Natural killer cell (primary cell): ENCODE measurements at regions of chr12 and their contacts with region 1.

Region 1: DNA sequence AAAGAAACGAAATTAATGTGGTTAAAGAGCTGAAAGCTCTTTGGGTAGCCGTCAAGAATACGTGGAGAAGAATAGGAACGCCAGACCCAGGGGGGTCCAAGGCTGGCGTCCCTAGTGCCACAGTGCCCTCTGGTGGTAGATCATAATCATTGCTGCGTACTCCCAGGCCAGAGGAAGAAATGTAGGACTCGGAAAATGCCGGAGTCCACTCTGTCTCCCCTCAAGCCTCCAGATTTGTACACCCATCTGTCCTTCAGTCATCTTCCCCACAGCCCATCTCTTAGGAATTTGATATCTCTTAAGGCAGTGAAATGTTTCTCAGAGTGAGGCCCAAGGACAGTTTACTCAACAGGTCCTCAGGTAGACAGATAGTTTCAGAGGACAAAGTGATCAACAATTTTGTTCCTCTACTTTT is 25.4 kb upstream of the PLEKHG6 start:
- DNase-seq: peak in 1 of 2 donors; percentile 87
- ATAC-seq: peak; percentile 82 to 92 (median 83)
- H3K4me3 ChIP-seq: no peak overlapping the region
- H3K4me3 Mint-ChIP-seq: no peak overlapping the region
- H3K27ac ChIP-seq: no peak overlapping the region
- H3K27ac Mint-ChIP-seq: no peak overlapping the region
- H3K4me1 ChIP-seq: no peaks in the 10 kb centered on the region
- H3K4me1 Mint-ChIP-seq: no peaks in the 10 kb centered on the region
- H3K27me3 ChIP-seq: no peaks in the 10 kb centered on the region
- H3K27me3 Mint-ChIP-seq: peaks cover 11 to 15% of the 10 kb centered on the region in 2 donors
- CTCF ChIP-seq: peak; percentile 74

Region 2: DNA sequence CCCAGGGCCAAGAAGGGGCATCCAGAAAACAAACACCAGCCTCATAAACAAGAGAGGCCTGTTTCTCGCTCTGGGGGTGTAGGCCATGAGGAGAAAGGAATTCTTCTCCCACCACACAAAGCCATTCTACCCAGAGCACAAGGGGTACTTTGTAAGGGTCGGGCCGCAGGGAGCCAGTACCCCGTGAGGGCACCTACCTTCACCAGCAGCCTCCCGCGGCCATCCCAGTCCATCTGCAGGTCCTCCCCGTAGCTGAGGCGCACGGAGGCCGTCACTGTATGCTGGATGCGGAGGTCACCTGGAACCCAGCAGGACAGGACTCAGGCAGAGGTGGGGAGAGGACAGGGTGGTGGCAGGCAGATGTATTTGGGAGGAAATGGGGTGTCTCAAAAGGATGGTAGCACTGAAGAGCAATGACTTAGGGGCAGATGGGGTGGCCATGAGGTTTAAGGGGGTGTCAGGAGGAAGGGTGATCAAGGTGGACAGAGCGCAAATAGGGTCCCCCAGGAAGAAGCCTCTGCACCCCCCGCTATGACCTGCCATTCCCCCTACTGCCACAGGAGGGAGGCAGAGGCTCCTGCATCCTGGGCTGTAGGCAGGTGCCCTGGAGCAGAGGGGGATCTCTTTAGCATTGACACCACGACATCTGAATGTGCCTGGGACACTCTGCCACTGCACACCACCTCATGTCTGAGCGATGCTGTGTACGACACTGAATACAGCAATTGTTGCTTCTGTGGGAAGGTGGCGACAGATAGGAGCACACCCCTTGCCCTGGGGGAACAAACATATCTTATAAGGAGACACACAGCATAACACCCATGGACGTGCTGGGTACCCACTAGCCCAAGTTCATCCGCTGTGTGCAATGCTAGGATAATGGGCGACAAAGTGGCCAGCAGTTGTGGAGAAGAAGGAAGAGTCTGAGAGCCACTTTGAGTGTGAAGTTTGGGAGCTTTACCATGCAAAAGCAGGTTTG is 222.0 kb before region 1 on chr12:
- intact Hi-C with region 1: loop called (anchors 1 kb)
- DNase-seq: peak; percentile 43 to 79
- ATAC-seq: peak; percentile 76 to 98 (median 96)
- H3K4me3 ChIP-seq: no peak overlapping the region
- H3K4me3 Mint-ChIP-seq: no peak overlapping the region
- H3K27ac ChIP-seq: no peak overlapping the region
- H3K27ac Mint-ChIP-seq: no peak overlapping the region
- H3K4me1 ChIP-seq: no peaks in the 10 kb centered on the region
- H3K4me1 Mint-ChIP-seq: no peaks in the 10 kb centered on the region
- H3K27me3 ChIP-seq: no peaks in the 10 kb centered on the region
- H3K27me3 Mint-ChIP-seq: peaks cover 33 to 51% of the 10 kb centered on the region in 2 donors
- CTCF ChIP-seq: peak; percentile 86

Region 3: DNA sequence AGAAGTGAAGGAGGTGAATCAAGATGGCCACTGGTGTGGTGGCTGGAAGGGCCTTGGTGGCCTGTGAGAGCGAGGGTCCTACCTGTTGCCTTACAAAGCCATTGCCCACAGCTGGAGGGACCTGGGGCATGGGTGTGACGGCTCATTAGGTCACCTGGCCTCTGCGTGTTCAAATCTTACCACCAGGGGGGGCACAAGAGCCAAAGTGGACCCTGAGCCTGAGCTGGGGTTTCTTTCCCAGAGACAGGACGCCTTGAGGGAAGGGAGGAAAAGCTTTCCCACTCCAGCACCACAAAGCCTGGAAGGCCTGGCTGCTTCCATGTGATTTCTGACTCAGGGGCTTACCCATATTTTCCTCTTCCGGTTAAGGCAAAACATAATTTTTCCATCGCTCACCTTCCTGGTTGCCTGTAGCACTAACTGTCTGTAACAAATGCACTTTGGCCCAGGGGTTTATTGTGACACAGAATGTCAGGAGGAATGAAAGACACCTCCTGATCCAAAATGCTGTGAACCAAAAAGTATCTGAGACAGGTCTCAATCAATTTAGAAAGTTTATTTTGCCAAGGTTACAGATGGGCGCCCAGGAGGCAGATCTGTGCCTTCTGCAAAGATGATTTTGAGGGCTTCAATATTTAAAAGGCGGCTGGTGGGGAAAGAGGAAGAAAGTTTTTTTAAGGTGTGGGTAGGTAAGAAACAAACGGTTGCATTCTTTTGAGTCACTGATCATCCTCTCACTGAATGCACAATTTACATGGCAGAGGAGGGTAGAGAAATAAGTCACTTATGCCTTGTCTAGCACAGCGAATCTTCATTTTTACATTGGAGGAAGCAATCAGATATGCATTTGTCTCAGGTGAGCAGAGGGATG is 89.2 kb before region 1 on chr12:
- intact Hi-C with region 1: loop called (anchors 1 kb)
- DNase-seq: peak; percentile 65 to 84
- ATAC-seq: peak; percentile 72 to 89 (median 85)
- H3K4me3 ChIP-seq: no peak overlapping the region
- H3K4me3 Mint-ChIP-seq: no peak overlapping the region
- H3K27ac ChIP-seq: no peak overlapping the region
- H3K27ac Mint-ChIP-seq: no peak overlapping the region
- H3K4me1 ChIP-seq: peaks cover 13% of the 10 kb centered on the region
- H3K4me1 Mint-ChIP-seq: peaks cover 0 to 17% of the 10 kb centered on the region in 2 donors
- H3K27me3 ChIP-seq: peaks cover 9% of the 10 kb centered on the region
- H3K27me3 Mint-ChIP-seq: peaks cover 23 to 27% of the 10 kb centered on the region in 2 donors
- CTCF ChIP-seq: peak; percentile 83